B cell (primary cell): ENCODE measurements at regions of chr10 and their contacts with region 1.

Region 1: GRCh38 chr10:111323389-111323966 is 246.6 kb downstream of the ADRA2A start:
- DNase-seq: no peak
- ATAC-seq: no peak
- H3K4me3 ChIP-seq: no peak overlapping the region
- H3K4me3 Mint-ChIP-seq: no peak overlapping the region
- H3K27ac ChIP-seq: no peak overlapping the region
- H3K27ac Mint-ChIP-seq: no peak overlapping the region
- H3K4me1 ChIP-seq: no peaks in the 10 kb centered on the region
- H3K4me1 Mint-ChIP-seq: no peaks in the 10 kb centered on the region
- H3K27me3 ChIP-seq: peaks cover 0 to 7% (median 2%) of the 10 kb centered on the region in 4 experiments
- H3K27me3 Mint-ChIP-seq: peaks cover 29% of the 10 kb centered on the region
- CTCF ChIP-seq: no peak

Region 2: GRCh38 chr10:112774798-112775197 is 1451.3 kb after region 1 on chr10:
- CTCF ChIA-PET with region 1: no interaction called
- POLR2A ChIA-PET with region 1: no interaction called
- intact Hi-C with region 1: loop called (anchors 5 kb)
- DNase-seq: no peak
- ATAC-seq: no peak
- H3K4me3 ChIP-seq: no peak overlapping the region
- H3K4me3 Mint-ChIP-seq: no peak overlapping the region
- H3K27ac ChIP-seq: no peak overlapping the region
- H3K27ac Mint-ChIP-seq: no peak overlapping the region
- H3K4me1 ChIP-seq: no peaks in the 10 kb centered on the region
- H3K4me1 Mint-ChIP-seq: no peaks in the 10 kb centered on the region
- H3K27me3 ChIP-seq: no peaks in the 10 kb centered on the region
- H3K27me3 Mint-ChIP-seq: no peaks in the 10 kb centered on the region
- CTCF ChIP-seq: no peak